Posterior vena cava (tissue), 2 donors: ENCODE measurements at regions of chr13 and their contacts with region 1.

Region 1: DNA sequence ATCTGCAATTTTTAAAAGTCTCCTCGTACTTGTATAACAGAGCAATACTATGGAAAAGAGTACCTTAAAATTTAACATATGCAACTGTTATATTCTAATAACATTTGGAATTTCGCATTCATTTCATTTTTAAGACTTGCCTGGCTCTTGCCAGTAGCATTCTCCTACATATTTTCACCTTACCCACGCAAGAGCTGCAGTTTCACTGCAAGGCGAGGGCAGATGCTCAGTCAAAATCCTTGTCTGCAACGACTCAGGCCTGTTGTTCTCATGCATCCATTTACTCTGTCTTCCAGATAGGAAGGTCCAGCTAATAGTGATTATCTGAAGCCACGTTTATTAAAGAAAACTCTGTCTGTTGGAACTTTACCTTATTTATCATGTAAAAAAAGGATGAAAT is 227.0 kb upstream of the RFC3 start:
- DNase-seq: no peak

Region 2: GRCh38 chr13:33188093-33188882 is 402.6 kb before region 1 on chr13:
- intact Hi-C with region 1: no loop called
- DNase-seq: no peak

Region 3: GRCh38 chr13:33626407-33626806 is 35.5 kb after region 1 on chr13:
- intact Hi-C with region 1: loop called in 1 of 2 experiments (anchors 1 kb)
- DNase-seq: no peak